ENCODE measurements at regions of chr12 and their contacts with region 1.

Region 1: DNA sequence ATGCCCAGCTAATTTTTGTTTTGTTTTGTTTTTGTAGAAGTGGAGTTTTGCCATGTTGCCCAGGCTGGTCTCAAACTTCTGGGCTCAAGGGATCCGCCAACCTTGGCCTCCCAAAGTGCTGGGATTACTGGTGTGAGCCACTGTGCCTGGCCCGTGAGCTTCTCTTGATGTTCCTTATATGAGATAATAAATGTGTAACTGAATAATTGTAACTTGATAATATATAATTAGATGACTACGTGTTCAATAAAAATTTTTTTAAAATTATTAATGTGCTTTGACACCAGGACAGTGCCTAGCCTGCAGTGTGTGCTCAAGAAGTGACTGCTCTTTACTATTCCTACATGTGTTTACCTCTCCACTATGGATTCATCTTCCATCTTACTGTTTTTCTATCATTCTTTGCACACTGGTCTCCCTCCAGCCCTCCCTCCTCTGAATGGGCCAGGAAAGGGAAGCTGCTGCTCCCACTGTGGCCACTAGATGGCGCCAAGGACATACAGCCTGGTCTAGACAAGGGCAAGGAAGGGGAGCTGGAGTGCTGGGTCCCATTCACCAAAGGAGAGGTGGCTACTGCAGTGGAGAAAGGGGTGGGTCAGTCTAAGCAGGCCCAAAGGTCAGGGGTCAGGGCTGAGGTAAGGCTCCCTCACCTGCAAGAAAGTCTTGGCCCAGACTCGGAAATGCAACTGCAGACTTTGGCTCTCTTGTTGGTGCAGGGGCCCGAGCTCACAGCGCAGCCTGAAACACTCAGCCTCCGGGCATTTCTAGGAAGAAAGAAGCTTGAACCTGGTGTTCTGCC is 14.7 kb upstream of the ZNF385A start:
- DNase-seq: peak; percentile 85 to 90 (median 87)
- ATAC-seq: peak; percentile 95
- H3K4me3 ChIP-seq: no peak overlapping the region
- H3K27ac ChIP-seq: no peak overlapping the region
- H3K4me1 ChIP-seq: no peaks in the 10 kb centered on the region; a peak in 2 of 5 replicates
- H3K27me3 ChIP-seq: no peaks in the 10 kb centered on the region
- CTCF ChIP-seq: peak; percentile 94 to 99 (median 96)
- EP300 ChIP-seq: no peak
- POLR2A ChIP-seq: no peak; the same call in 1 of the 2 replicates
- RAD21 ChIP-seq: peak; percentile 95

Region 2: DNA sequence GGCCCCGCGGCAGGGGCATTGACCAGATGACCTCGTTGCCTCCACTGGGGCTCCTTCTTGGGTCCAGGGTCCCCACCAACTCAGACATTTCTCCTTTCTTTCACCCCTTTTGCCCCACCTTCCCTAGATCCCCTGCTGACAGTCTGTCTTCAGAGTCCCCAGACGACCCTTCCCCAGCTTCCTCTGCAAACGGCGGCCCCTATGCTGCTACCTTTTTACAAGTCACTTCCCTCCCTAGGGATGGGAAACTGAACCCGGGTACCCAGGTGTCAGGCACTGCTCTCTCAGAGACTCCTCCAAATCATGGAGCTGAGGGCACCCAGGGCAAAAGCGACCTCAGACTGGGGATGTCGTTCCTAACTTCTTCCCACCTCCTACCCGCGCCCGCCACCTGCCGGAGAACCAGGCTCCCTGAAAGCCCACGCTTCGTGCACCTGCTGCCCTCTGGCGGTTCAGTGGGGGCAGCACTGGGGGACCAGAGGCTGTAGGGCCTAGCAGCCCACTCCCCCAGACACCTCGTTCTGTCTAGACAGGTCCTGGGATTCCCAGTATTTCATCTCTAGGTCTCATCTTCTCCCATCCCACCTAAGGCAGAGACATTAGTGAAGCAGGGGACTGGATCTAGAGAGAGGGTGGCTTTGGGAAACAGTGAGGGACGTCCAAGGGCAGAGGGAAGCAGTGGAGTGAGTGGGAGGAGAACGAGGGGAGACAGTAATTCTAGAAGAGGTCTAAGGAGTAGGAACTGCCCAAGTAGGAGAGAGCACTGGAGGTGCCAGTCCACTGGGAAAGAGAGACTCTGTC is 19.6 kb before region 1 on chr12:
- CTCF ChIA-PET with region 1: interaction called, 9 read pairs
- POLR2A ChIA-PET with region 1: interaction called, 5 read pairs
- in situ Hi-C with region 1: no loop called
- intact Hi-C with region 1: loop called (anchors 1 kb)
- DNase-seq: peak; percentile 85 to 95 (median 90)
- ATAC-seq: peak; percentile 93
- H3K4me3 ChIP-seq: peak overlapping the region; percentile 36; the same call in 1 of the 2 replicates
- H3K27ac ChIP-seq: peak overlapping the region; percentile 29; the same call in 2 of the 3 replicates
- H3K4me1 ChIP-seq: peaks cover 43 to 49% of the 10 kb centered on the region in 2 experiments
- H3K27me3 ChIP-seq: no peaks in the 10 kb centered on the region
- CTCF ChIP-seq: peak; percentile 100
- EP300 ChIP-seq: peak; percentile 59
- POLR2A ChIP-seq: no peak
- RAD21 ChIP-seq: peak; percentile 89 to 96

Region 3: DNA sequence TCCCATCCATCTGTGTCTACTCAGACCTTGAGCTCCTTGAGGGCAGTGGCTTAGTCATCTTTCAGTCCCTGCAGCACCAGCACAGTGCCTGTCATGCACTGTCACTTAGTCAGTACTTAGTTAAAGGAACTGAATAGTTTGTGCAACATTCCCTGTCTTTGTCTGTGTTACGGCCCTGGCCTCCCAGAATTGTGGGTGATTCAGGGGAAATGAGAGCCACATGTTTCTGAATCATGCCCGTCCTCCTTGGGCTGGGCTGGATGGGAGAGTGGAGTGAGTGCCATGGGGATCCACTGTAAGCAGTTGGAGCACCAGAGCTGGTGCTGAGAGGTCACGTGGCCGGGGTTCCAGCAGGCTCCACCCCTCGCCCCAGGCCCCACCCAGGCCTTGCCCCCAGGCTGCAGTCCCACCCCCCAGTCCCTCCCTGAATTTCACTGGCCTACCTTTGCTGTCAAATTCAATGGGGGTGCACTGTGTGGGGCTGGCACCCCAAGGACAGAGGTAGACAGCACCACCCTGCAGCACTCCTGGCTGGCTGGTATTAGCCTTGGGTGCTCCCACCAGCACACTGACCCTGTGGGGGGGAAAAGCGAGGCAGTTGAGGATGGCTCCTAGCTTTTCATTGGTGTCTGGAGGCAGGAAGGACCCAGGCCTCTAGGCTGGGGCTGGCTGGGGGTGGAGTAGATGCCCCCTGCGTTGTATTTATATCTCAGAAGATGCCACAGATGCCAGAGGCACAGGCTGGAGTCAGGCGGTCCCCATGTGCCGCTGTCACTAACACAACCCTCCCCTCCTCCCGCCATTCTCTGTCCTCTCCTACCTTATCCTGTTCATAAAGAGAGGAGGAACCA is 12.4 kb after region 1 on chr12:
- CTCF ChIA-PET with region 1: no interaction called
- POLR2A ChIA-PET with region 1: interaction called, 36 read pairs
- in situ Hi-C with region 1: no loop called
- intact Hi-C with region 1: no loop called
- DNase-seq: peak; percentile 55 to 80 (median 76)
- ATAC-seq: peak; percentile 95
- H3K4me3 ChIP-seq: no peak overlapping the region
- H3K27ac ChIP-seq: no peak overlapping the region
- H3K4me1 ChIP-seq: peaks cover 27% of the 10 kb centered on the region in 2 experiments
- H3K27me3 ChIP-seq: no peaks in the 10 kb centered on the region
- CTCF ChIP-seq: no peak
- EP300 ChIP-seq: no peak
- POLR2A ChIP-seq: no peak
- RAD21 ChIP-seq: no peak

Region 4: DNA sequence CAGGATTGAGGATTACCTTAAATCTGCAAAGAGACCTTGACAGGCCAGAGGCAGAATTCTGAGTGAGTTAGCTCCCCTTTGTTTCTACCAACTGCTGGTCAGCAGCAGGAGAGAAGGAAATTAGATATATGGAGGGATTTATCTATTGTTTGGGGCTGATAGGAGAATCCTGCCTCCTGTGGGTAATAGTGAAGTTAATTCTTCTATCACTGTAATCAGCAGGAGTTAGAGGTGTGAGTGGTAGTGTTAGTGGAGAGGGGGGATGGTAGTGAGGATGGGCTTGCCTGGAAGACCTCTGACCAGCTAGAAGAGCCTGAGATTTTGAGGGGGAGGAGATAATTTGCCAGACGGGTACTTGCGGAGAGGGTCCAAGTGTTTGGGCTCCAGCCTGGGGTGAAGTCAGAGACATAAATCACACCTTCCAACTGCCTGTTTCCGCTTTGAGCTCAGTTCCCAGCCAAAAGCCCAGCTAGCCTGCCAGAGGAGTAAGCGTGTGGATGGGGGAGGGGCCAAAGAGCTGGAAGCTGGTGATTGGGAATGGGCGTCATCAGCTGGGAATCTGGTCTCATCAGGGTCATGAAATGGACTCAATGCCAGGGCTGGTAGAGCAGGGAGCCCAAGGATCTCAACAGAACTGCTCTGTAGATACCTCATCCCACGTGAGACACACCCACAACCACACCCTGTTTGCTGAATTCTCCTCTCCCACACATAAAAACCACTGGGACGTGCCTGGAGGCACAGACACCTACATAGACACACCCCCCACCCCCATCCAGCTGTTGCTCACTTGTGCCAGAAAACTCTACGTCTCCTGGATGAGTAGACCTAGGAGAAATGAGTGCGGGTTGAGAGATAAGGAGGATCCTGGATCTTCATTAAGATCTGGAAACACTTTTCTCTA is 33.0 kb after region 1 on chr12:
- CTCF ChIA-PET with region 1: interaction called, 9 read pairs
- POLR2A ChIA-PET with region 1: interaction called, 18 read pairs
- in situ Hi-C with region 1: no loop called
- intact Hi-C with region 1: no loop called
- DNase-seq: peak; percentile 71 to 89 (median 86)
- ATAC-seq: peak; percentile 83
- H3K4me3 ChIP-seq: no peak overlapping the region
- H3K27ac ChIP-seq: peak overlapping the region; percentile 29; the same call in 2 of the 3 replicates
- H3K4me1 ChIP-seq: peaks cover 24 to 51% of the 10 kb centered on the region in 2 experiments
- H3K27me3 ChIP-seq: no peaks in the 10 kb centered on the region
- CTCF ChIP-seq: no peak
- EP300 ChIP-seq: no peak; the same call in none of the 2 replicates
- POLR2A ChIP-seq: no peak
- RAD21 ChIP-seq: no peak

Region 5: DNA sequence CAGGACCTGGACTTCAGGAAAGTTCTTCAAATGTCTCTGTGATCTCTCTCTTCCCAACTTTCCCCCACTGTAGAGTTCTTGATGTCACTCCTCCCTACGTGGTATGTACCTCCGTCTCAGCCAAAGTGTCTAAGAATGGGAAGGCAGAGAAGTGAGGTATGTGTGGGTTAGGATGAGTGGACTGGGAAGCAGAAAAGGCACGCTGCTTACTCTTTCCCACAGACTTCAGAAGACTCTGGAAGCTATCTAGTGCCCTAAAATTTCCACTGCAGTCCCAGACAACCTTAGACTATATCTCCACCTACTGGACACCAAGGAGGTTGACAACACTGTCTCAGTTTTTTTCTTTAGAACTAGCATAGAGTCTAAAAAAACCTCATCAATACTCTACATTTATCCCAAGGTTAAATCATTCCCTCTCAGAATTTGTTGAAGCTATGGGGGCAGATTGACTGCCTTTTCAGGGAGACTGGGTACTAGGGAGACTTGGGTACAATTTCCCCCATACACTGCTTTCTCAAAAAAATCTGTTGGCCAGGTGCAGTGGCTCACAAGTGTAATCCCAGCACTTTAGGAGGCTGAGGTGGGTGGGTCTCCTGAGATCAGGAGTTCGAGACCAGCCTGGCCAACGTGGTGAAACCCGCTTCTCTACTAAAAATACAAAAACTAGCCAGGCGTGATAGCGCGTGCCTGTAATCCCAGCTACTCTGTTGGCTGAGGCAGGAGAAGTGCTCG is 40.5 kb after region 1 on chr12:
- CTCF ChIA-PET with region 1: interaction called, 58 read pairs
- POLR2A ChIA-PET with region 1: interaction called, 14 read pairs
- in situ Hi-C with region 1: loop called (anchors 10 kb)
- intact Hi-C with region 1: loop called (anchors 1 kb)
- DNase-seq: peak; percentile 58 to 72 (median 70)
- ATAC-seq: peak; percentile 94
- H3K4me3 ChIP-seq: no peak overlapping the region
- H3K27ac ChIP-seq: peak overlapping the region; percentile 35; the same call in 1 of the 3 replicates
- H3K4me1 ChIP-seq: peaks cover 0 to 16% of the 10 kb centered on the region in 2 experiments; a peak in 3 of 5 replicates
- H3K27me3 ChIP-seq: no peaks in the 10 kb centered on the region
- CTCF ChIP-seq: peak; percentile 85 to 95 (median 87)
- EP300 ChIP-seq: no peak
- POLR2A ChIP-seq: no peak
- RAD21 ChIP-seq: peak; percentile 96 to 97

Region 6: GRCh38 chr12:54891717-54892554 is 492.7 kb after region 1 on chr12:
- CTCF ChIA-PET with region 1: no interaction called
- POLR2A ChIA-PET with region 1: no interaction called
- in situ Hi-C with region 1: no loop called
- intact Hi-C with region 1: no loop called
- DNase-seq: no peak
- ATAC-seq: no peak
- H3K4me3 ChIP-seq: no peak overlapping the region
- H3K27ac ChIP-seq: no peak overlapping the region
- H3K4me1 ChIP-seq: no peaks in the 10 kb centered on the region; a peak in 1 of 5 replicates
- H3K27me3 ChIP-seq: no peaks in the 10 kb centered on the region; a peak in 1 of 5 replicates
- CTCF ChIP-seq: no peak
- EP300 ChIP-seq: no peak
- POLR2A ChIP-seq: no peak
- RAD21 ChIP-seq: no peak